AG04450 (cell line): ENCODE measurements at regions of chr20 and their contacts with region 1.

Region 1: GRCh38 chr20:44217342-44218092 is 6.9 kb upstream of the OSER1 start:
- DNase-seq: peak; percentile 46
- H3K4me3 ChIP-seq: no peak overlapping the region
- H3K27ac ChIP-seq: no peak overlapping the region
- H3K27me3 ChIP-seq: no peaks in the 10 kb centered on the region
- CTCF ChIP-seq: peak; percentile 97

Region 2: DNA sequence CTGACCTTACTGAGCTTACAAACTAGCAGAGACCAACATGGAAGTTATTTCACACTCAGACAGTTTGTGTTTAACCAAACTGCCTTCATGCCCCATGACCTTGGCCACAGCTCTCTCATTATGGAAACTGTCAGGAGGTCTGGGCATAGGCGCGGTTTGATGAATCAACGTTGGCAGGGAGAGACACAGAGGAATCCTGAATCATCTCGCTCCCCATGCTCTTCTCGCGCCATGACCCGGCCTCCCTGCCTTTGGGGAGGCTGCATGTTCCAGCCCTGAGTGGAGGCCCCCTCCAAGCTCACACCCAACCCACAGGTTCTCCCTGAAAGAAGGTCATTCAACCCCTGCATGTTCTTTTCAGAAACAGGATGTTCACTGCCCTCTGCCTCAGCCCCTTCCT is 13.7 kb after region 1 on chr20:
- CTCF ChIA-PET with region 1: interaction called, 26 read pairs
- POLR2A ChIA-PET with region 1: no interaction called
- DNase-seq: no peak
- H3K4me3 ChIP-seq: no peak overlapping the region
- H3K27ac ChIP-seq: no peak overlapping the region
- H3K27me3 ChIP-seq: no peaks in the 10 kb centered on the region
- CTCF ChIP-seq: no peak

Region 3: GRCh38 chr20:44310664-44311639 is 93.4 kb after region 1 on chr20 and contains the start of gene FITM2:
- CTCF ChIA-PET with region 1: interaction called, 287 read pairs
- POLR2A ChIA-PET with region 1: interaction called, 3 read pairs
- DNase-seq: peak; percentile 95
- H3K4me3 ChIP-seq: peak within 1 kb of the TSS; percentile 99
- H3K27ac ChIP-seq: peak within 1 kb of the TSS; percentile 31
- H3K27me3 ChIP-seq: no peaks in the 10 kb centered on the region
- CTCF ChIP-seq: peak; percentile 93
- polyA plus RNA-seq, gene FITM2: 4.1 and 4.4 TPM in 2 replicates

Region 4: DNA sequence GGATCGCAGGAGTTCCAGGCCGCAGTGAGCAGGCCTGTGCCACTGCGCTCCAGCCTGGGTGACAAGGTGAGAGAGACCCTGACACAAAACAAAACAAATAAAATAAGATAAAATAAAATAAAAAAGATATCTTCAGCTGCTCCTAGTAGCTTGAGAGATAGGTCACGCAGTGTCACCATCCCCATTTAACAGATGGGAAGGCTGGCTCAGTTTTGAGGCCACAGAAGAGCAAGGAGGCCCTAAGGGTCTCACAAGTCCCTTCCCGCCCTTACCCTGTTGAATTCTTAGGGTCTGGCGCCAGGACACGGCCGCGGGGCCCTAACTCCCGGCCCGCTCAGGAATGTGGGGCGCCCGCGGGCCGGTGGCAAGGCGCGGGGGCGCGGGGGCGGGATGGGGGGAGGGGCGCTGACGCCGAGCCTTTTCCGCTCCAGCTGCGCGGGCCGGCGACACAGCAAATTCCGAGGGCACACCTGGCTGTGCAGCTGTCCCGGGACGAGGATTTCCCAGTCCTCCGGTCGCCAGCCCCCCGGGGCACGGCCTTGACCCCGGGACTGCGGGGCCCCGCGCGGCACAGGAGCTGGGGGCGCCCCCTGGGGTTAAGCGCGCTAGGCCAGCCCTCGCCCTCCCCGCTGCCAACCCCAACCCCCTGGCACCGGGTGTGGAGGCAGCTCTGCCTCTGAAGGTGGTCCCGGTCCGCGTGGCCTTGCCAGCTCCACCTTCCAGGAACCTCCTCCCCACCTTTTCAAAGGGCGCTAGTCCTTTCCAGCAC is 109.1 kb after region 1 on chr20:
- CTCF ChIA-PET with region 1: interaction called, 12 read pairs
- POLR2A ChIA-PET with region 1: no interaction called
- DNase-seq: no peak
- H3K4me3 ChIP-seq: peak overlapping the region; percentile 29; the same call in 1 of the 2 replicates
- H3K27ac ChIP-seq: no peak overlapping the region
- H3K27me3 ChIP-seq: peaks cover 9% of the 10 kb centered on the region
- CTCF ChIP-seq: no peak

Region 5: DNA sequence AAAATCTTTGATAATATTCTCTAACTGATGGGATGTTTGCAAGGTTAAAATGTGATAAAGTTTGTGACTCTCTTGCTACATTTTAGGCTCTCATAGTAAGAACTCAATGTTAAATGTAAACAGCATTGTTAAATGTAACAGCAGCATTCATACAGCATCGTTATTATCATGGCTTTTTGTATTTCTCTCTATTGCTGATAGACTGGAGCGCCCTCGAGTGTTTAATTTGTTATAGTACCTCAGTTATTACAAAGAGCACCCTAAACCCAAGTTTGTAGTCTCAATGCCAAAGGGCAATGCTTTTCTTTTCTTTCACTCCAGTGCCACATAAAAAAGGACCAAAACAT is 243.3 kb after region 1 on chr20:
- CTCF ChIA-PET with region 1: interaction called, 64 read pairs
- POLR2A ChIA-PET with region 1: no interaction called
- DNase-seq: no peak
- H3K4me3 ChIP-seq: no peak overlapping the region
- H3K27ac ChIP-seq: no peak overlapping the region
- H3K27me3 ChIP-seq: peaks cover 16% of the 10 kb centered on the region
- CTCF ChIP-seq: peak; percentile 56

Region 6: GRCh38 chr20:44609511-44610312 is 392.2 kb after region 1 on chr20:
- CTCF ChIA-PET with region 1: interaction called, 10 read pairs
- POLR2A ChIA-PET with region 1: no interaction called
- DNase-seq: peak; percentile 55
- H3K4me3 ChIP-seq: no peak overlapping the region
- H3K27ac ChIP-seq: peak overlapping the region; percentile 39
- H3K27me3 ChIP-seq: no peaks in the 10 kb centered on the region
- CTCF ChIP-seq: peak; percentile 100